MCF 10A (cell line): ENCODE measurements at regions of chr12 and their contacts with region 1.

Region 1: GRCh38 chr12:59595883-59596540 is at the start of gene SLC16A7:
- DNase-seq: peak; percentile 91
- H3K4me3 Mint-ChIP-seq: peak within 1 kb of the TSS; percentile 72
- H3K27ac Mint-ChIP-seq: peak within 1 kb of the TSS; percentile 92
- H3K4me1 Mint-ChIP-seq: peaks cover 27% of the 10 kb centered on the region
- H3K27me3 Mint-ChIP-seq: no peaks in the 10 kb centered on the region
- CTCF ChIP-seq: no peak
- total RNA-seq, gene SLC16A7: 28.4 and 32.6 TPM in 2 replicates

Region 2: DNA sequence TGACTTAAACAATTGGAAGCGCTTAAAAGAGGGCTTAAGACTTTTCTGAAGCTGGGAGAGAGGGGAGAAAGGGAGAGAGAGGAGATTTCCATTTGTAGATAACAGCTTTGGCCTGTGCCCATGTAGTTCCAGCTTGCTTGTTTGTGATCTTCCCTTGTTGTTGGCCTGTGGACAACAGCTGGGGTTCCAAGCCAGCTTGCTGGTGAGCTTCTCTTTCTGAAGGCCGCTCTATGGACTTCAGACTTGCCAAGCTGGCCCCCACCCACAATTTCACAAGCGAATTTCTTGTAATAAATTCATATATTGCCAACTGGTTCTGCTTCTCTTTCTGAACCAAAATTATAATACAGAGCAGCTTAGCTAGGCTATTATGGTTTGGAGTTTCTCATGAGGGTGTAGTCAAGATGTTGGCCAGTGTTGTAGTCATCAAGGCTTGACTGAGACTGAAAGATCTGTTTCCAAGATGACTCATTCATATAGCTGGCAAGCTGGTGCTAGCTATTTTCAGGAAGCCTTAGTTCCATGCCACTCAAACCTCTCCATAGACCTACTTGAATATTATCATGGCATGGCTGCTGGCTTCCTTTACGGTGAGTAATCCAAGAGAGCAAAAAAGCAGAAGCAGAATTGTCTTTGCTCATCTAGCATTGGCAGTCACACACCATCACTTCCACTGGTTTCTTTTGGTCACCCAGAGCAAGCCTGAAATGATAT is 1565.3 kb before region 1 on chr12:
- CTCF ChIA-PET with region 1: no interaction called
- POLR2A ChIA-PET with region 1: no interaction called
- intact Hi-C with region 1: no loop called
- DNase-seq: peak; percentile 85
- H3K4me3 Mint-ChIP-seq: no peak overlapping the region
- H3K27ac Mint-ChIP-seq: peak overlapping the region; percentile 84
- H3K4me1 Mint-ChIP-seq: peaks cover 32% of the 10 kb centered on the region
- H3K27me3 Mint-ChIP-seq: no peaks in the 10 kb centered on the region
- CTCF ChIP-seq: no peak

Region 3: GRCh38 chr12:59403259-59403932 is 192.6 kb before region 1 on chr12:
- CTCF ChIA-PET with region 1: interaction called, 4 read pairs
- POLR2A ChIA-PET with region 1: interaction called, 10 read pairs
- intact Hi-C with region 1: loop called (anchors 2 kb)
- DNase-seq: peak; percentile 83
- H3K4me3 Mint-ChIP-seq: peak overlapping the region; percentile 4
- H3K27ac Mint-ChIP-seq: no peak overlapping the region
- H3K4me1 Mint-ChIP-seq: peaks cover 10% of the 10 kb centered on the region
- H3K27me3 Mint-ChIP-seq: no peaks in the 10 kb centered on the region
- CTCF ChIP-seq: peak; percentile 84

Region 4: GRCh38 chr12:59452259-59452658 is 143.8 kb before region 1 on chr12:
- CTCF ChIA-PET with region 1: no interaction called
- POLR2A ChIA-PET with region 1: no interaction called
- intact Hi-C with region 1: loop called (anchors 1 kb)
- DNase-seq: peak; percentile 55
- H3K4me3 Mint-ChIP-seq: no peak overlapping the region
- H3K27ac Mint-ChIP-seq: no peak overlapping the region
- H3K4me1 Mint-ChIP-seq: peaks cover 6% of the 10 kb centered on the region
- H3K27me3 Mint-ChIP-seq: no peaks in the 10 kb centered on the region
- CTCF ChIP-seq: no peak

Region 5: GRCh38 chr12:59650402-59651228 is 54.6 kb after region 1 on chr12:
- CTCF ChIA-PET with region 1: no interaction called
- POLR2A ChIA-PET with region 1: interaction called, 11 read pairs
- intact Hi-C with region 1: no loop called
- DNase-seq: no peak
- H3K4me3 Mint-ChIP-seq: no peak overlapping the region
- H3K27ac Mint-ChIP-seq: no peak overlapping the region
- H3K4me1 Mint-ChIP-seq: peaks cover 26% of the 10 kb centered on the region
- H3K27me3 Mint-ChIP-seq: no peaks in the 10 kb centered on the region
- CTCF ChIP-seq: no peak

Region 6: DNA sequence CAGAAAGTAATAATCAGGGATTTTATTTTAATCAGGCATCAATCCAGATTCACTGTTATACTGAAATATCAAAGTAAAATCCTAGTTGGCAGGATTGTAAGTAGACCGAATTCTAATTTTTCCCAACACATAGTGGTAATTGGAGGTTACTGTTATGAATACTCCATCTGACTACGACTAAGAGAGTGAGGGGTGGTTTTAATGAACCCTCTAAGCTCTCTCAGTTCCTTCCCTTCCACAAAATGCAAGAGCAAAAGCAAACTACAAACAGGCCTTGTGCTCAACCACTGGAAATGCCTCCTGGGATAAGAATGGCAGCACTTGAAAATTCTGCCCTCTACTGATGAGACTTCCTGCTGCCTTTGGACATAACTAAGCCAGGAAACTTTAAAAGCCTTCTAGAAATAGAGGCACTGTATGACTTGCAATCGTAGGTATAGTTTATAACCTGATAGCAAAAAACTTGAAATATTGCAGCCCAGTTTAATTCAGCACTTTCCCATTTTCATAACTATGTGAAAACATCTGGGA is 184.7 kb after region 1 on chr12:
- CTCF ChIA-PET with region 1: no interaction called
- POLR2A ChIA-PET with region 1: no interaction called
- intact Hi-C with region 1: loop called (anchors 1 kb)
- DNase-seq: peak; percentile 52
- H3K4me3 Mint-ChIP-seq: no peak overlapping the region
- H3K27ac Mint-ChIP-seq: no peak overlapping the region
- H3K4me1 Mint-ChIP-seq: no peaks in the 10 kb centered on the region
- H3K27me3 Mint-ChIP-seq: no peaks in the 10 kb centered on the region
- CTCF ChIP-seq: peak; percentile 40

Region 7: DNA sequence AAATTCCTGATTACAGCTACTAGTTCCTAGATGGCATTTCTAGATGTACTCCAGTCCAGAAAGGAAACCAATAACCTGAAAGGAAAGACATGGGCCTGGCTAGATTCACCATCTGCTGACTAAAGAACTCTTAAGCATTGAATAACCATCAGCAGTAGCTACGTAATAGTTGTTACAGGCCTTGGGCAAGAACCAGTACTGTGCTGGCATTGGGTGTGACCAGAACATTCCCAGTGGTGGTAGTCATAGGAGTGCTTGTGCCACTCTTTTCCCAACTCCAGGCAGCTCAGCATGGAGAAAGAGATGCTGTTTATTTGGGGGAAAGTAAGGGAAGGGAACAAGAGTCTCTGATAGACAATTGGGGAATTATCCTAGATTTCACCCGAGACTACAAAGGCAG is 333.1 kb after region 1 on chr12:
- CTCF ChIA-PET with region 1: no interaction called
- POLR2A ChIA-PET with region 1: interaction called, 8 read pairs
- intact Hi-C with region 1: loop called (anchors 1 kb)
- DNase-seq: peak; percentile 92
- H3K4me3 Mint-ChIP-seq: peak overlapping the region; percentile 50
- H3K27ac Mint-ChIP-seq: peak overlapping the region; percentile 95
- H3K4me1 Mint-ChIP-seq: peaks cover 33% of the 10 kb centered on the region
- H3K27me3 Mint-ChIP-seq: no peaks in the 10 kb centered on the region
- CTCF ChIP-seq: no peak

Region 8: GRCh38 chr12:60194678-60195077 is 598.7 kb after region 1 on chr12:
- CTCF ChIA-PET with region 1: no interaction called
- POLR2A ChIA-PET with region 1: no interaction called
- intact Hi-C with region 1: loop called (anchors 5 kb)
- DNase-seq: no peak
- H3K4me3 Mint-ChIP-seq: no peak overlapping the region
- H3K27ac Mint-ChIP-seq: no peak overlapping the region
- H3K4me1 Mint-ChIP-seq: peaks cover 7% of the 10 kb centered on the region
- H3K27me3 Mint-ChIP-seq: no peaks in the 10 kb centered on the region
- CTCF ChIP-seq: no peak